AG04450 (cell line): ENCODE measurements at regions of chr14 and their contacts with region 1.

Region 1: GRCh38 chr14:59055439-59056045 is 132.9 kb upstream of the DAAM1 start:
- DNase-seq: peak; percentile 30
- H3K4me3 ChIP-seq: no peak overlapping the region
- H3K27ac ChIP-seq: no peak overlapping the region
- H3K27me3 ChIP-seq: no peaks in the 10 kb centered on the region
- CTCF ChIP-seq: peak; percentile 86

Region 2: GRCh38 chr14:58501214-58501816 is 554.2 kb before region 1 on chr14:
- CTCF ChIA-PET with region 1: interaction called, 71 read pairs
- POLR2A ChIA-PET with region 1: interaction called, 3 read pairs
- DNase-seq: peak; percentile 72
- H3K4me3 ChIP-seq: no peak overlapping the region
- H3K27ac ChIP-seq: no peak overlapping the region
- H3K27me3 ChIP-seq: no peaks in the 10 kb centered on the region
- CTCF ChIP-seq: peak; percentile 91

Region 3: GRCh38 chr14:58979325-58979724 is 76.2 kb before region 1 on chr14:
- CTCF ChIA-PET with region 1: no interaction called
- POLR2A ChIA-PET with region 1: no interaction called
- DNase-seq: no peak
- H3K4me3 ChIP-seq: no peak overlapping the region
- H3K27ac ChIP-seq: no peak overlapping the region
- H3K27me3 ChIP-seq: no peaks in the 10 kb centered on the region
- CTCF ChIP-seq: no peak

Region 4: DNA sequence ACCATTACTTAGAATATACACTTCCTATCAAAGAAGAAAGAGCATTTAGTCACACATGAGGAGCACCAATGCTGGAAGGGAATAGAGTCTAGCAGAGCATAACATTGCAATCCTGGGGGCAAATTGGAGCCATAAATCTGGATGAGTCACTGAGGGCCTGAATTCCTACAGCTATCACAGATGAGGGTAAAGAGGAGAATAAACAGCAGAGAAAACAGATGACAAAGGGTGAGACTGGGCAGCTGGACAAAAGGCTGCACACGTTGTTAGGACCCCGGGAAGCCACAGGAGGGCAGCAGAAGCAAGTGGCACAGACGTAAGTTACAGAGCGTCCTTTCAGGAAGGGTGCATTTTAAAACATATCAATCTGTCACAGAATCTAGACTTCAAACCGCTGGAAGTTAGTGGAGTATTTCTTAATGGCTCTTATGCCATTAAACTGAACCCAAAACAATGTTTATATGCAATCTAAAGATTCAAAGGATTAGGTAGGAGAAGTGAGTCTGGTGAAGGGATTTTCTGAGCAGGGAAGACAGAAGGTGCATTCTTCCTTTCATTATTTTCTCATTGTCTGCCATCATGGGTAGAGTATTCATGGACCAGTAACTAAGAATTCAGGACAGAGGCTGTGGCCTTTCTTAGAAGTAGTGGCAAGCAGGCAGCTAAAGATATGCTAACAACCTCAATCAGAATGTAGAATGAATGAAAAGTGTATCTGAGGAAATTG is 26.9 kb before region 1 on chr14:
- CTCF ChIA-PET with region 1: interaction called, 10 read pairs
- POLR2A ChIA-PET with region 1: no interaction called
- DNase-seq: peak; percentile 93
- H3K4me3 ChIP-seq: no peak overlapping the region
- H3K27ac ChIP-seq: peak overlapping the region; percentile 53
- H3K27me3 ChIP-seq: no peaks in the 10 kb centered on the region
- CTCF ChIP-seq: peak; percentile 95

Region 5: DNA sequence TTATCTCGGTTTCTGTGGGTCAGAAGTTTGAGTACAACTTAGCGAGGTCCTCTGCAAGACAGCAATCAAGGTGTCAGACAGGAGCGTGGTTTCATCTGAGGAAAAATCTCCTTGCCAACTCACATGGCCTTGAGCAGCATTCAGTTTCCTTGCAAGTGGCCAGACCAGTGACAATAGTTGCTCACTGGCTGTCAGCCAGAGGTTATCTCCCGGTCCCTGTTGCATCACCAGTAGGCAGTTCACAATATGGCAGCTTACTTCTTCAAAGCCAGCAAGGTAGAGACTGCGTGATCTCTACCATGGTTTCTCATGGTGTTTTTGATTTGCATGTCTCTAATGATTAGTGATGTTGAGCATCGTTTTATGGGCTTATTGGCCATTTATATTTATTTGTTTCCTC is 10.8 kb before region 1 on chr14:
- CTCF ChIA-PET with region 1: interaction called, 18 read pairs
- POLR2A ChIA-PET with region 1: no interaction called
- DNase-seq: no peak
- H3K4me3 ChIP-seq: no peak overlapping the region
- H3K27ac ChIP-seq: no peak overlapping the region
- H3K27me3 ChIP-seq: no peaks in the 10 kb centered on the region
- CTCF ChIP-seq: no peak

Region 6: GRCh38 chr14:59126710-59127432 is 71.3 kb after region 1 on chr14:
- CTCF ChIA-PET with region 1: interaction called, 15 read pairs
- POLR2A ChIA-PET with region 1: no interaction called
- DNase-seq: no peak
- H3K4me3 ChIP-seq: no peak overlapping the region
- H3K27ac ChIP-seq: no peak overlapping the region
- H3K27me3 ChIP-seq: no peaks in the 10 kb centered on the region
- CTCF ChIP-seq: peak; percentile 75